PC-9 (cell line): ENCODE measurements at regions of chr16 and their contacts with region 1.

Region 1: DNA sequence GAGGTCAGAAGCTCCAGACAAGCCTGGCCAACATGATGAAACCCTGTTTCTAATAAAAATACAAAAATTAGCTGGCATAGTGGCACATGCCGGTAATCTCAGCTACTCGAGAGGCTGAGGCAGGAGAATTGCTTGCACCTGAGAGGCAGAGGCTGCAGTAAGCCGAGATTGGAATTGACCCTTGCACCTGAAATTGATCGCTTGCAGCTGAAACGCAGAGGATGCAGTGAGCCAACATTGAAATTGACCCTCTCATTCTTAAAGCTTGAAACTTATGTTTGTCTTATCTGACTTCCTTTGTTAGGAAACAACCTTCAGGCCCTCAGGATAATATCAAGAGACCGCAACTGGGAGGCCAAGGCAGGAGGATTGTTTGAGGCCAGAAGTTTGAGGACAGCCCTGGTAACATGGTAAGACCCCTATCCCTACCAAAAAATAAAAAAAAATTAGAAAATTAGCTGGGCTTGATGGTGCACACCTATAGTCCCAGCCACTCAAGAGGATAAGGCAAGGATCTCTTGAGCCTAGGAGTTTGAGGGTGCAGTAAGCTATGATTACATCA is 376.6 kb upstream of the XYLT1 start:
- DNase-seq: no peak
- H3K4me3 ChIP-seq: no peak overlapping the region
- H3K27ac ChIP-seq: no peak overlapping the region
- H3K4me1 ChIP-seq: no peaks in the 10 kb centered on the region
- H3K27me3 ChIP-seq: peaks cover 72% of the 10 kb centered on the region
- CTCF ChIP-seq: no peak

Region 2: GRCh38 chr16:17828012-17828411 is 19.3 kb before region 1 on chr16:
- CTCF ChIA-PET with region 1: no interaction called
- POLR2A ChIA-PET with region 1: no interaction called
- intact Hi-C with region 1: no loop called
- DNase-seq: no peak
- H3K4me3 ChIP-seq: no peak overlapping the region
- H3K27ac ChIP-seq: no peak overlapping the region
- H3K4me1 ChIP-seq: no peaks in the 10 kb centered on the region
- H3K27me3 ChIP-seq: no peaks in the 10 kb centered on the region
- CTCF ChIP-seq: no peak

Region 3: DNA sequence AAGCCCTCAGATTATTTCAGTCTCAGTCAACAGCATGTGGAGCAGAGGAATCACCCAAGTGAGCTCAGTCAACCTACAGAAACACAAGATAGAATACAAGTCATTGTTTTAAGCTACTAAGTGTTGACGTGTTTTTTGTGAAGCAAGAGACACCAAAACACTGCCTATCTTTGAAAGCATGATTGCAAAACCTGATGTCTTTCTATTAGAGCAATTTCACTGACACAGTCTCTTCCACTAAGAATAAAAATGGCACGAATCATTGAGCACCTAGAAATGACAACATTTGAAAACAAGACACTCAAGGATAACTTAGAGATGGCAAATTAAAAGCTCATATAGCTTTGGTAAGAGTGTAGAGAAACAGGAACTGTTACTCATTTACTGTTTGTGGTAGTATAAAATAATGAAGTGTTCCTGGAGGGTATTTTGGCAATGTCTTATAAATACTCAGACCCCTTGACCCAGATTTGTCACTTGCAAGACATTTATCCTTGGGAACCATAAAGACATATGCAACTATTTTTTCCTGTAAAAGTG is 30.6 kb after region 1 on chr16:
- CTCF ChIA-PET with region 1: no interaction called
- POLR2A ChIA-PET with region 1: no interaction called
- intact Hi-C with region 1: no loop called
- DNase-seq: no peak
- H3K4me3 ChIP-seq: no peak overlapping the region
- H3K27ac ChIP-seq: no peak overlapping the region
- H3K4me1 ChIP-seq: no peaks in the 10 kb centered on the region
- H3K27me3 ChIP-seq: 0 out of 2 replicates have a peak, but pooled peaks cover 2% of the 10 kb centered on the region
- CTCF ChIP-seq: no peak

Region 4: GRCh38 chr16:17901309-17901708 is 54.0 kb after region 1 on chr16:
- CTCF ChIA-PET with region 1: interaction called, 16 read pairs
- POLR2A ChIA-PET with region 1: no interaction called
- intact Hi-C with region 1: no loop called
- DNase-seq: no peak
- H3K4me3 ChIP-seq: no peak overlapping the region
- H3K27ac ChIP-seq: no peak overlapping the region
- H3K4me1 ChIP-seq: no peaks in the 10 kb centered on the region
- H3K27me3 ChIP-seq: peaks cover 3% of the 10 kb centered on the region; the same call in 1 of the 2 replicates
- CTCF ChIP-seq: no peak